ENCODE measurements at regions of chr6 and their contacts with region 1.

Region 1: GRCh38 chr6:56314683-56315523 is 67.5 kb upstream of the COL21A1 start:
- DNase-seq: peak; percentile 52
- ATAC-seq: peak; percentile 93
- H3K4me3 ChIP-seq: no peak overlapping the region
- H3K27ac ChIP-seq: no peak overlapping the region
- H3K4me1 ChIP-seq: no peaks in the 10 kb centered on the region
- H3K27me3 ChIP-seq: no peaks in the 10 kb centered on the region
- CTCF ChIP-seq: peak; percentile 59 to 91 (median 85)
- POLR2A ChIP-seq: no peak
- RAD21 ChIP-seq: peak; percentile 86

Region 2: DNA sequence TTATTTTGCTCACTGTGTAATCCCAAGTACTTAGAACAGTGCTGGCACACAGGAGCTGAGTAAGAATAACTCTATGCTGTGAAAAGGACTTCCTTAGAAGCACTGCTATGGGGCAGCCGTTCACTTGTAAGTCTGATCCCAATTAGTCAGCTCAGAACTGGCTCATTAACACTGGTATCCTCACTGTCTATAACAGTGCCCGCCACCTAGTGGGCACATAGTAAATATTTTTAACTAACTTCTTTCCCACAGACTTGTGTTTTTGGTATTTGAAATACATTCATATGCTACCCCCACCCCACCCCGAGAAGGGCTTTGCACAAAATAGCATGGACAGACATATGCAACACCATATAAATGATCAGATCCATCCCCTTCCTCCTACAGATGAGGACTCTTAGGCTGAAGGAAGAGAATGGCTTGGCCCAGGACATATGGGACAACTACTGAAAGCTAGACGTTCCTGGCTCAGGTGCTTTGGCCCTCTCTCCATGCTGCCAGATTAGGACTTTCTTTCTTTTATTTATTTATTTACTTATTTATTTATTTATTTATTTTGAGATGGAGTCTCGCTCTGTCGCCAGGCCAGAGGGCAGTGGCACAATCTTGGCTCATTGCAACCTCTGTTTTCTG is 280.7 kb after region 1 on chr6:
- CTCF ChIA-PET with region 1: interaction called, 9 read pairs
- POLR2A ChIA-PET with region 1: no interaction called
- RAD21 ChIA-PET with region 1: no interaction called
- intact Hi-C with region 1: loop called (anchors 2 kb)
- DNase-seq: peak; percentile 12
- ATAC-seq: peak; percentile 80
- H3K4me3 ChIP-seq: no peak overlapping the region
- H3K27ac ChIP-seq: no peak overlapping the region
- H3K4me1 ChIP-seq: no peaks in the 10 kb centered on the region
- H3K27me3 ChIP-seq: no peaks in the 10 kb centered on the region
- CTCF ChIP-seq: peak; percentile 40 to 70 (median 59); a peak in 5 of 6 replicates
- POLR2A ChIP-seq: no peak
- RAD21 ChIP-seq: peak; percentile 45